Esophagus muscularis mucosa (tissue), 4 donors: ENCODE measurements at regions of chr16 and their contacts with region 1.

Region 1: GRCh38 chr16:75251280-75252048 is at the start of gene BCAR1:
- DNase-seq: peak; percentile 96
- H3K4me3 ChIP-seq: peak within 1 kb of the TSS; percentile 74 to 84 (median 77)
- H3K27ac ChIP-seq: peak within 1 kb of the TSS; percentile 90 to 95 (median 92)
- H3K4me1 ChIP-seq: peaks cover 90 to 99% (median 97%) of the 10 kb centered on the region in 4 donors
- H3K27me3 ChIP-seq: no peaks in the 10 kb centered on the region
- CTCF ChIP-seq: peak in 1 of 3 experiments; percentile 18
- EP300 ChIP-seq: no peak
- POLR2A ChIP-seq: no peak
- total RNA-seq, gene BCAR1: 31.6 to 67.1 (median 54.8) TPM

Region 2: DNA sequence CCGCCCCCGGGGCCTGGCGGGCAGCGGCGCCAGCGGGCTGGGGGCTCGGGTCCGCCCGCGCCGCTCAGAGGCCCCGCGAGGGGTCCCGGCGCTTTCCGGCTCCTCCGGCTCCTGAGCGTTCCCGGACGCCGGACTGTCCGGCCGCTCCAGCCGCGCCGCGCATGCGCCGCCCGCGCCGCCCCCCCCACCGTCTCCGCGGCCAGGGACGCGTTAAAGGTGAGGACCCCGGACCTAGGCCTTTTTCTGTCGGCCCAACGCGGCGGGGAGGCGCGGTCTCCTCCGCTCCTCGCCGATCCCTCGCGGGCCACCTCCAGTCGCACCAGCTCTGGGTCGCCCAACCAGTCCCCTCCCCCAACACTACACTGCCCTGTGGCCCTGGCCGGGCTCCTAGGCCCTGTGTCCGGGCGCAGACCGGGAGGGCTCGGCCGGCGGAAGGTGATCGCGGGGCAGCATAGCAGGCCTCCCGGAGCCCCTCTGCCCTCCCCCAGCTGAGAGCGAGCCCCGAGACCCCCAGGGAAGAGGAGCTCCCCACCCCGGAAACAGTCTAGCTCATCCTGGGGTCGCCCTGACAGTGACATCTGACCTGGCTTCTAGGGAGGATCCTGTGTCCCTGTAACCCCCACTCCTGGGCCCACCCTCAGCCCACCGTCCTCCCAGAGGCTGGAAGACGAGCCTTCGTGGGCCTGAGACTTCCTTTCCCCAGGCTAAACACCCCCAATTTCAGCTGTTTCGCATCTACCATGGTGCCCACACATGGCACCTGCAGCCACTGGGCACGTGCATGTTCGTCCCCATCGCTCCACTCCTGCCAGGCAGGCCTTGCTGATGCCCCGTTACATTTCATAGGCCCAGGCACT is 14.6 kb after region 1 on chr16:
- intact Hi-C with region 1: loop called (anchors 2 kb)
- DNase-seq: no peak
- H3K4me3 ChIP-seq: peak overlapping the region; percentile 86 to 99 (median 92)
- H3K27ac ChIP-seq: peak overlapping the region; percentile 91 to 93 (median 93)
- H3K4me1 ChIP-seq: peaks cover 63 to 66% (median 65%) of the 10 kb centered on the region in 4 donors
- H3K27me3 ChIP-seq: no peaks in the 10 kb centered on the region
- CTCF ChIP-seq: no peak
- EP300 ChIP-seq: no peak
- POLR2A ChIP-seq: no peak

Region 3: GRCh38 chr16:75519881-75520280 is 268.4 kb after region 1 on chr16:
- intact Hi-C with region 1: no loop called
- DNase-seq: no peak
- H3K4me3 ChIP-seq: no peak overlapping the region
- H3K27ac ChIP-seq: no peak overlapping the region
- H3K4me1 ChIP-seq: peaks cover 4 to 15% (median 12%) of the 10 kb centered on the region in 4 donors
- H3K27me3 ChIP-seq: no peaks in the 10 kb centered on the region
- CTCF ChIP-seq: no peak
- EP300 ChIP-seq: no peak
- POLR2A ChIP-seq: no peak